H1 (cell line): ENCODE measurements at regions of chr11 and their contacts with region 1.

Region 1: GRCh38 chr11:60887556-60887955 is 18.8 kb downstream of the PRPF19 start:
- DNase-seq: peak in 1 of 2 experiments; percentile 60
- H3K4me3 ChIP-seq: no peak overlapping the region
- H3K27ac ChIP-seq: no peak overlapping the region
- H3K4me1 ChIP-seq: no peaks in the 10 kb centered on the region
- H3K27me3 ChIP-seq: no peaks in the 10 kb centered on the region
- CTCF ChIP-seq: peak; percentile 54 to 85 (median 84)
- EP300 ChIP-seq: no peak
- POLR2A ChIP-seq: no peak
- RAD21 ChIP-seq: peak; percentile 92 to 93

Region 2: GRCh38 chr11:60762851-60763691 is 124.5 kb before region 1 on chr11:
- CTCF ChIA-PET with region 1: interaction called, 16 read pairs
- POLR2A ChIA-PET with region 1: no interaction called
- DNase-seq: no peak
- H3K4me3 ChIP-seq: no peak overlapping the region
- H3K27ac ChIP-seq: no peak overlapping the region
- H3K4me1 ChIP-seq: peaks cover 0 to 1% (median 0%) of the 10 kb centered on the region in 4 experiments; a peak in 1 of 7 replicates
- H3K27me3 ChIP-seq: peaks cover 0 to 6% (median 3%) of the 10 kb centered on the region in 4 experiments; a peak in 3 of 7 replicates
- CTCF ChIP-seq: peak in 2 of 3 experiments; percentile 47 to 58; a peak in 2 of 4 replicates
- EP300 ChIP-seq: no peak
- POLR2A ChIP-seq: no peak
- RAD21 ChIP-seq: peak; percentile 40 to 48

Region 3: GRCh38 chr11:60801194-60801593 is 86.4 kb before region 1 on chr11:
- CTCF ChIA-PET with region 1: interaction called, 10 read pairs
- POLR2A ChIA-PET with region 1: no interaction called
- DNase-seq: no peak
- H3K4me3 ChIP-seq: no peak overlapping the region
- H3K27ac ChIP-seq: no peak overlapping the region
- H3K4me1 ChIP-seq: no peaks in the 10 kb centered on the region
- H3K27me3 ChIP-seq: peaks cover 0 to 3% (median 0%) of the 10 kb centered on the region in 4 experiments; a peak in 1 of 7 replicates
- CTCF ChIP-seq: peak in 1 of 3 experiments; percentile 3; a peak in 1 of 4 replicates
- EP300 ChIP-seq: no peak
- POLR2A ChIP-seq: no peak
- RAD21 ChIP-seq: no peak

Region 4: GRCh38 chr11:60831143-60831500 is 56.4 kb before region 1 on chr11:
- CTCF ChIA-PET with region 1: interaction called, 522 read pairs
- POLR2A ChIA-PET with region 1: interaction called, 17 read pairs
- DNase-seq: peak; percentile 49 to 85
- H3K4me3 ChIP-seq: no peak overlapping the region
- H3K27ac ChIP-seq: no peak overlapping the region
- H3K4me1 ChIP-seq: no peaks in the 10 kb centered on the region
- H3K27me3 ChIP-seq: no peaks in the 10 kb centered on the region; a peak in 1 of 7 replicates
- CTCF ChIP-seq: peak; percentile 88 to 95 (median 92)
- EP300 ChIP-seq: no peak
- POLR2A ChIP-seq: no peak
- RAD21 ChIP-seq: peak; percentile 95 to 97

Region 5: GRCh38 chr11:60860943-60861342 is 26.6 kb before region 1 on chr11:
- CTCF ChIA-PET with region 1: interaction called, 38 read pairs
- POLR2A ChIA-PET with region 1: no interaction called
- DNase-seq: no peak
- H3K4me3 ChIP-seq: no peak overlapping the region
- H3K27ac ChIP-seq: no peak overlapping the region
- H3K4me1 ChIP-seq: no peaks in the 10 kb centered on the region
- H3K27me3 ChIP-seq: no peaks in the 10 kb centered on the region
- CTCF ChIP-seq: no peak
- EP300 ChIP-seq: no peak
- POLR2A ChIP-seq: no peak
- RAD21 ChIP-seq: no peak

Region 6: GRCh38 chr11:60872961-60873524 is 14.5 kb before region 1 on chr11:
- CTCF ChIA-PET with region 1: interaction called, 52 read pairs
- POLR2A ChIA-PET with region 1: interaction called, 6 read pairs
- DNase-seq: peak in 1 of 2 experiments; percentile 60
- H3K4me3 ChIP-seq: no peak overlapping the region
- H3K27ac ChIP-seq: no peak overlapping the region
- H3K4me1 ChIP-seq: peaks cover 0 to 4% (median 0%) of the 10 kb centered on the region in 4 experiments; a peak in 4 of 7 replicates
- H3K27me3 ChIP-seq: no peaks in the 10 kb centered on the region
- CTCF ChIP-seq: no peak
- EP300 ChIP-seq: no peak
- POLR2A ChIP-seq: no peak
- RAD21 ChIP-seq: no peak

Region 7: DNA sequence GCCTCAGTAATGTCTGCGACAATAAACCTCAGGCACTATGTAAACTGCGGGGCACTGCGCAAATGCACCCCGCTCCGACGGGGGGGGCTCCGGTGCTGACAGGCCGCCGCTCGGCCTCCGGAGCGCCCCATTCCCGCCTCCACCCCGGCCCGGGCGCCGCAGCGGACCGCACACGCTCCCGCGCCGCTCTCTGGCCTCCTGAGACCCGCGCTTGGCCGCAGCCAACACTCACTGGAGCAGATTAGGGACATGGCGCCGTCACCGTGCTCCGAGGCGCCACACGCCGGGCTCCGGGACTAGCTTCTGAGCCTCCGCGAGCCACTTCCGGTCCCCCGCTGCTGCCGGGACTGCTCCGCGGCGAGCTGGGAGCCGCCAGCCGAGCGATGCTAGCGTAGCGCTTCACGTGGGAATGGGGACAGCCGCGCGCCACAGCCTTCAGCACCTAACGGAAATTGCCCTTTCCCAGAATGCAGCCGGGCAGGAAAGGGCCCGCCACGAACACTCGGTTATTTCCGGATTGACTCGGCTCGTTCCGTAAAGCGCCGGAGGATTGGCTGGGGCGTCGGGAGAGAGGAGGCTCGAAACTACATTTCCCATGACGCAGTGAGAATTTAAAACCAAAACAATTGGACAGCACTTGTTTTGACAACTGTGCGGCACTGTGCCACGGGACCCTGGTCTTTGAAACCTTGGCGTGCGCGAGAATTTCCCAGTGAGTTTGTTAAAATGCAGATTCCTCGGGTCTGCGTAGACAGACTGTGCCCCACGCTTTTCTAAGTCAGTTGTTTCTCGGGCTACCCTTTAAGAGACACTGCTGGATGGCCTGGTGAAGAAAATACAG is 18.8 kb after region 1 on chr11 and contains the start of gene PRPF19:
- CTCF ChIA-PET with region 1: interaction called, 16 read pairs
- POLR2A ChIA-PET with region 1: interaction called, 18 read pairs
- DNase-seq: peak; percentile 74 to 99
- H3K4me3 ChIP-seq: peak within 1 kb of the TSS; percentile 76 to 91 (median 90)
- H3K27ac ChIP-seq: peak within 1 kb of the TSS; percentile 55
- H3K4me1 ChIP-seq: peaks cover 2 to 8% (median 5%) of the 10 kb centered on the region in 4 experiments; a peak in 4 of 7 replicates
- H3K27me3 ChIP-seq: peaks cover 0 to 2% (median 0%) of the 10 kb centered on the region in 4 experiments; a peak in 1 of 7 replicates
- CTCF ChIP-seq: peak in 1 of 3 experiments; percentile 6; a peak in 1 of 4 replicates
- EP300 ChIP-seq: no peak
- POLR2A ChIP-seq: peak; percentile 49 to 69
- RAD21 ChIP-seq: no peak
- total RNA-seq, gene PRPF19: 140 and 141 TPM in 2 replicates

Region 8: DNA sequence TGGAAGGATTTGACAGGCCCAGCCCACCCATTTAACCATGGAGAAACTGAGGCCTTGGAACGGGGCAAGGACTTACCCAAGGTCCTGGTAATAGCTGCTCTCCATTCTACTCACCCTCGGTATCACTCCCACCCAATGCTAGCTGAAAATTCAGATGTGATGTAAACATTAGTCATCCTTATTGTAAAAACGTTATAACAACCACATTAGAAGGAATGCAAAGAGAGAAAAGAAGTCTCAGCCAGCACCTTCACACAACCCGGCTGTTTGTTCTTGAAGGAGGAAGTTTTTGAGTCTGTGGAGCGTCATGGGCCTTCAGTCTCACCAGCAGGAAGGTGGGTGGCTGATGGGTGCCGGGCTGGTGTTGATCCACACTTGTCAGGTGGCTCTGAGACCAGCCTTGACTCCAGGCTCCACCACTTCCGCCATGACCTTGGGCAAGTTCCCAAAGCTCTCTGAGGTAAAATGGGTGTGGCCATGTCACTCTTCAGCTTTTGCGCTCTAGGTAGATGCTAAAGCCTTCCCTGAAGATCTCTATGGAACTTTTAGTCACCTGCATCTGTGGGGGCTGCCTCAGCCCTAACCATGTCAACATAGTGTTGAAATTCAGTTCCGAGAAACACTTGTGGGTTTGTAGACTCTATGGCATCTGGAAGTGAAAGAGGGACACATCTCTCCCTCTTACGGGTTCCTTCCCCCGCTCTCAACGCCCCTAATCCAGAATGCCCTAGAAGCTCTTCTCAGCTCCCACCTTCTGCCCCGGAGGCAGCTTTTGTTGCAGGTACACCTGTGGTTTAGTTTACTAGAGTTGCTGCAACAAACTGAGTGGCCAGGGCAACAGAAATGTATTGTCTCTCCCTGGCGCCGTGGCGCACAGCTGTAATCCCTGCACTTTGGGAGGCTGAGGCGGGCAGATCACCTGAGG is 98.7 kb after region 1 on chr11:
- CTCF ChIA-PET with region 1: no interaction called
- POLR2A ChIA-PET with region 1: no interaction called
- DNase-seq: no peak
- H3K4me3 ChIP-seq: no peak overlapping the region
- H3K27ac ChIP-seq: no peak overlapping the region
- H3K4me1 ChIP-seq: no peaks in the 10 kb centered on the region
- H3K27me3 ChIP-seq: no peaks in the 10 kb centered on the region; a peak in 1 of 7 replicates
- CTCF ChIP-seq: no peak
- EP300 ChIP-seq: no peak
- POLR2A ChIP-seq: no peak
- RAD21 ChIP-seq: no peak

Region 9: GRCh38 chr11:61187505-61188130 is 300.1 kb after region 1 on chr11:
- CTCF ChIA-PET with region 1: no interaction called
- POLR2A ChIA-PET with region 1: no interaction called
- DNase-seq: peak; percentile 58 to 90
- H3K4me3 ChIP-seq: no peak overlapping the region
- H3K27ac ChIP-seq: no peak overlapping the region
- H3K4me1 ChIP-seq: no peaks in the 10 kb centered on the region
- H3K27me3 ChIP-seq: no peaks in the 10 kb centered on the region
- CTCF ChIP-seq: peak; percentile 80 to 93 (median 89)
- EP300 ChIP-seq: no peak
- POLR2A ChIP-seq: no peak
- RAD21 ChIP-seq: peak; percentile 96 to 97

Region 10: DNA sequence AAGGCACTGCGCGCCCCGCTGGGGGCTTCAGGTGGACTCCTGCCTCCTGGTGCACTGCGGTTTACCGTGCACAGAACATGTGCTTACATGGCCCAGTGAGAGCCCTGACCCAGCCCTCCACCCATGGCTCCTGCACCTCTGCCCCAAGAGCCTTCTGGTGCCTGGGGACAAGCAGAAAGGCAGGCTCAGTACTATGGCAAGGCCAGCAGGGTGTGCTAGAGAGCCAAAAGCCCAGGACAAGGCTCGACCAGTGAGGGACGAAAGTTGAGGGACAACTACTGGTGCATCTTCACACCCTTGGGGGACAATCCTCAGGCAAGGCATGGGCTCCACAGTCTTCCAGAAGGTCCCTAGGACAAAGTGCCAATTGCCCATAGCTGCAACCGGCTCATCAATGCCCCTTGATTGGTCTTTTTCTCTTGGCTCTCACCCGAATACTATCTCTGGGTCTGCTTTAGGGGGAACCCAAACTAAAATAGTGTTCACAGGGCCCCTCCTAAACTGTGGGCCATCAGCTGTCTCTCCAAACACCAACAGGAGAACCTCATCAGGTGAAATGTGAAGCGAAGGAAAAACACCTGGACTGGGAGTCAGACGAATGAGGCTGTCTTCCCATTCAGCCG is 367.0 kb after region 1 on chr11:
- CTCF ChIA-PET with region 1: no interaction called
- POLR2A ChIA-PET with region 1: no interaction called
- DNase-seq: peak; percentile 38 to 89
- H3K4me3 ChIP-seq: no peak overlapping the region
- H3K27ac ChIP-seq: no peak overlapping the region
- H3K4me1 ChIP-seq: no peaks in the 10 kb centered on the region; a peak in 1 of 7 replicates
- H3K27me3 ChIP-seq: no peaks in the 10 kb centered on the region; a peak in 1 of 7 replicates
- CTCF ChIP-seq: peak; percentile 89 to 99 (median 99)
- EP300 ChIP-seq: no peak
- POLR2A ChIP-seq: no peak
- RAD21 ChIP-seq: peak; percentile 66 to 84